Activated CD4-positive, alpha-beta memory T cell treated with anti-CD3 and anti-CD28 coated beads, Interleukin-2, amount 10 ng/mL, durations not matched to agents 7 days and 5 days (primary cell): ENCODE measurements at regions of chr19 and their contacts with region 1.

Region 1: DNA sequence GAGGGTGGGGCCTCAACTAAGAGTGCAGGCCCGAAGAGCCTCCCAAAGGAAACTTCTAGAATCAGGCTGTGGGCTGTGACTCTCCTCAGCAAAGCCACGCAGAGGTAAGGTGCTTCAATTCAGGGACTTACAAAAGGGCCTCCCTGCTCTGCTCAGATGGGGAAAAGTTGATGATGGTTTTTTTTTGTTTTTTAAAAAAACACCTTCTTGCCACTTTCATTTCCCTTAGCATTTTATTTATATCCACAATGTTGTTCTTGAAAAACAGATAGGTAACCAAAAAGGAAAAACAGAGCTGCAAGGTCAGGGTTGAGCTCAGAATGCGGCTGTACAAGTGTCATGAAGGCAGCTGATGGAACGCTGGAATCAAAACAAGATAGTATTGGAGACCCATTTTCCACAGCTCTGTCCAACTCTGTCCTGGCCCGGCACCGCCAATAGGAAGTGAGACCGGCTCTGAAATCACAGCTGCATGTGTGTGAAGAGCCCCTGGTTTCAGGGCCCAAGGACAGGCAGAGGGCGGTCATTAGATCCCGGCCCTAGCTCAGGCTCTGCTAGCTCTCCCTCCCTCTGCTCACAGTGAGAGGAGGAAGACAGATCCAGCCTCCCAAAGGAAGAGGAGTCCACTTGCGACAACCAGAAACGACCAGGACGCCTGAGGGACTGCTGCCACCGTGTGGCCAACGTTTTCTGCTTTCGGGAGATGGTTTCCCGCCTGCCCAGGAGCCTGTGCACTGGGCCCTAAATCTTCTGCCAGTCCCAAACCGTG is 58.3 kb downstream of the KLF2 start:
- DNase-seq: peak; percentile 87
- H3K4me3 Mint-ChIP-seq: peak overlapping the region; percentile 32
- H3K27ac Mint-ChIP-seq: peak overlapping the region; percentile 82
- H3K4me1 Mint-ChIP-seq: peaks cover 47% of the 10 kb centered on the region
- H3K27me3 Mint-ChIP-seq: no peaks in the 10 kb centered on the region

Region 2: GRCh38 chr19:16197622-16198369 is 185.2 kb before region 1 on chr19 and contains the start of gene AP1M1:
- CTCF ChIA-PET with region 1: interaction called, 10 read pairs
- POLR2A ChIA-PET with region 1: interaction called, 4 read pairs
- DNase-seq: peak; percentile 99
- H3K4me3 Mint-ChIP-seq: peak within 1 kb of the TSS; percentile 87
- H3K27ac Mint-ChIP-seq: peak within 1 kb of the TSS; percentile 95
- H3K4me1 Mint-ChIP-seq: peaks cover 55% of the 10 kb centered on the region
- H3K27me3 Mint-ChIP-seq: no peaks in the 10 kb centered on the region
- total RNA-seq, gene AP1M1: 131 to 151 TPM

Region 3: GRCh38 chr19:16266586-16266942 is 116.4 kb before region 1 on chr19:
- CTCF ChIA-PET with region 1: interaction called, 11 read pairs
- POLR2A ChIA-PET with region 1: interaction called, 8 read pairs
- DNase-seq: peak; percentile 86
- H3K4me3 Mint-ChIP-seq: peak overlapping the region; percentile 2
- H3K27ac Mint-ChIP-seq: peak overlapping the region; percentile 76
- H3K4me1 Mint-ChIP-seq: peaks cover 62% of the 10 kb centered on the region
- H3K27me3 Mint-ChIP-seq: peaks cover 11% of the 10 kb centered on the region

Region 4: GRCh38 chr19:16295057-16295456 is 87.9 kb before region 1 on chr19:
- CTCF ChIA-PET with region 1: no interaction called
- POLR2A ChIA-PET with region 1: no interaction called
- DNase-seq: no peak
- H3K4me3 Mint-ChIP-seq: no peak overlapping the region
- H3K27ac Mint-ChIP-seq: no peak overlapping the region
- H3K4me1 Mint-ChIP-seq: peaks cover 4% of the 10 kb centered on the region
- H3K27me3 Mint-ChIP-seq: peaks cover 19% of the 10 kb centered on the region

Region 5: GRCh38 chr19:16338470-16339360 is 44.2 kb before region 1 on chr19:
- CTCF ChIA-PET with region 1: interaction called, 34 read pairs
- POLR2A ChIA-PET with region 1: interaction called, 3,221 read pairs
- DNase-seq: peak; percentile 83
- H3K4me3 Mint-ChIP-seq: peak overlapping the region; percentile 67
- H3K27ac Mint-ChIP-seq: peak overlapping the region; percentile 85
- H3K4me1 Mint-ChIP-seq: peaks cover 70% of the 10 kb centered on the region
- H3K27me3 Mint-ChIP-seq: peaks cover 4% of the 10 kb centered on the region

Region 6: DNA sequence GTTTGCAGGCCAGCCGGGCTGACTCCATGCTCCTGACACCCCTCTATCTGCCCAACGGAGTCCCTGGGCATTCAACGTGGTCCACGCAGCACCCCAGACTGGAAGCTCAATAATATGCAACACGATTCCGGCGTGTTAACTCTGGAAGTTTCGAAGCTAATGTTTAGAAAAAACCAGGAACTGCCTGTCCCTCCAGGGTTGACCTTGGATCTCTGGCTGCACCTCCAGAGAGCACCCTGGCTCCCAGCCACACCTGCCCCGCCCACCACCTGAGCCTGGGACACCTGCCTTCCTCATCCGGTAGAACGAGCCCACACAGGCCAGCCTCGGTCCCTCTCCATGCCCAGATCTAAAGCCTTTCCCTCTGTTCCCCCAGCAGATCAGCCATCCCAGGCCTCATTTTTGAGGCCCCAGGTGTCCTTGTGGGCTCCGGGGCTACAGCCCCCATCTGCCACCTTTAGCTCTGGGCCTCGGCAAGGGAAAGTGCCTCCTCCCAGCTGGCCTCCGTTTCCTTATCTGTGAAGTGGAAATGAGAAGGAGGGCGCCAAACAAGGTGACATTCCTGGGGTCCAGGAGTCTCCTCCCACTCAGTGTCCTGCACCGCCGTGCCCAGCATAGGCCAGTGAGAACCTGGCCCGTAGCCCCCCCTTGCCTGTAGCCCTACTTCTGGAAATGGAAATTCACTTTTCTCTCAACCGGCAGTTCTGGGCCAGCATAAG is 19.7 kb before region 1 on chr19:
- CTCF ChIA-PET with region 1: interaction called, 41 read pairs
- POLR2A ChIA-PET with region 1: interaction called, 283 read pairs
- DNase-seq: no peak
- H3K4me3 Mint-ChIP-seq: no peak overlapping the region
- H3K27ac Mint-ChIP-seq: peak overlapping the region; percentile 63
- H3K4me1 Mint-ChIP-seq: peaks cover 84% of the 10 kb centered on the region
- H3K27me3 Mint-ChIP-seq: peaks cover 2% of the 10 kb centered on the region

Region 7: GRCh38 chr19:16429066-16429758 is 46.3 kb after region 1 on chr19:
- CTCF ChIA-PET with region 1: no interaction called
- POLR2A ChIA-PET with region 1: no interaction called
- DNase-seq: no peak
- H3K4me3 Mint-ChIP-seq: no peak overlapping the region
- H3K27ac Mint-ChIP-seq: peak overlapping the region; percentile 49
- H3K4me1 Mint-ChIP-seq: peaks cover 34% of the 10 kb centered on the region
- H3K27me3 Mint-ChIP-seq: no peaks in the 10 kb centered on the region